ENCODE measurements at regions of chr12 and their contacts with region 1.

Region 1: DNA sequence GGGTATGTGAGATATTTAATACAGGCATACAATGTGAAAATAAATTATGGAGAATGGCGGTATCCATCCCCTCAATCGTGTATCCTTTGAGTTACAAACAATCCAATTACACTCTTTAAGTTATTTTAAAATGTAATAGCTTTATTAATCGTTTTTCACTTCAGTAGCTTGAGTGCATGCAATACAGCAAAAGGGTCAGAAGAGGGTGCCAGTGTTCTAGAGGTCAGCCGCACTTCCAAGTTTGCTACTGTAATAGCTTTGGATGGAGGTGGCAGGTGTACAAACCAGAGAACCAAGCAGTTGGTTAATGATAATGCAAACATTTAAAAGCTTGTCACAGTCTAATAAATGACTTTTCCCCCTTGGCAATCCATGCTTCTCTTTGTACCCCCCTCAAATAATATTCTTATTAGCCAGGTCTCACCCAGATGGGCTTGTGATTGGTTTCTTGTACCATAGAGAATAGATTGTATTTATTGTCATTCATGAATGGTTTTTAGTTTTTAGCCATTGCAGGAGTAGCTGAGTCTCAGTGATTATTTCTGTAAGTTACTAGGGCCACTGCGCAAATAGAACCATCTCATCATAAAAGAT is 127.0 kb downstream of the ERC1 start:
- DNase-seq: peak; percentile 46

Region 2: DNA sequence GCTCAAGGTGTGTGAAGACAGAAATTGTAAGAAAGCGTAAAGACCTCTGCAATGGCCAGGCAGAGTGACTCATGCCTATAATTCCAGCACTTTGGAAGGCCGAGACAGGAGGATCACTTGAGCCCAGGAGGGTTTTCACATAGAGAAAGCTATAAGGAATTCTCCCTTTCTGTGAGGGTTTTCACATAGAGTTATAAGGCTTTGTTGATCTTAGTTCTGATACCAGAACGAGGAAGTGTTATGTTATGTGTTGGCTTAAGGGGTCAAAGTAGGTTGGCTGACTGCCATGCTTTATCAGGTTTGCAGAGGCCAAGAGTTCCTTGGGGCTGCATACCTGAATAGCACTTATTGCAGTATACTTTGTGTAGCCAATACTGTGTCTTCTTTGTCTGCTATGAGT is 12.1 kb after region 1 on chr12:
- CTCF ChIA-PET with region 1: interaction called, 17 read pairs
- POLR2A ChIA-PET with region 1: no interaction called
- DNase-seq: no peak

Region 3: DNA sequence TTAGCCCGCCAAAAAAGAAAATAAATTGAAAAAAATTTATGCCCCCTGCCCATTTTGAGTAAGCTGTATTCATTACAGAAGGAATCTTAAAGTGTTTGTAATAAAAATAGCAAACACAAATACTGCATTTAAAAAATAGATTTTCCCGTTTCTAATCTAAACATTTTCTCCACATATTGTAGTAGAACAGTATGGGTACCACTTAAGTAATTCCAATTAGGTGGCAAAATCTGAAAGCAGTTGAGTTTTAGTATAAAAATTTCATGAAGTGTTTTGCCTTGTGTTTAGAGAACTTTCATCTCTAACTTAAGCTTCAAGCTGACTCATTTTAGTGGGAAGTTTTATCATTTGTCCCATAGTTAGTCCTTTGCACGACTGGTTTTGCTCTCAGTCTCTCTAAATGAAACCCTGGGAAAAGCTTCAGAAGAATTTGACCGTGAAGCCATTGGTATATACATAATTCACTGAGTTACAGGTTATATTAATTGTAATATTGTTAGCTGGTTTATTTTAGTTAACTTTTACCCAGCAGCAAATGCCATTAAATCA is 87.5 kb after region 1 on chr12:
- CTCF ChIA-PET with region 1: interaction called, 14 read pairs
- POLR2A ChIA-PET with region 1: no interaction called
- DNase-seq: no peak

Region 4: GRCh38 chr12:1576410-1577241 is 458.6 kb after region 1 on chr12:
- CTCF ChIA-PET with region 1: interaction called, 45 read pairs
- POLR2A ChIA-PET with region 1: no interaction called
- DNase-seq: peak; percentile 47

Region 5: GRCh38 chr12:1583421-1584078 is 465.5 kb after region 1 on chr12:
- CTCF ChIA-PET with region 1: interaction called, 45 read pairs
- POLR2A ChIA-PET with region 1: interaction called, 7 read pairs
- DNase-seq: peak; percentile 70

Region 6: GRCh38 chr12:1605129-1606020 is 487.3 kb after region 1 on chr12:
- CTCF ChIA-PET with region 1: interaction called, 24 read pairs
- POLR2A ChIA-PET with region 1: interaction called, 10 read pairs
- DNase-seq: peak; percentile 79

Measured in HEK293T (cell line).